ENCODE measurements at regions of chr16 and their contacts with region 1.

Region 1: DNA sequence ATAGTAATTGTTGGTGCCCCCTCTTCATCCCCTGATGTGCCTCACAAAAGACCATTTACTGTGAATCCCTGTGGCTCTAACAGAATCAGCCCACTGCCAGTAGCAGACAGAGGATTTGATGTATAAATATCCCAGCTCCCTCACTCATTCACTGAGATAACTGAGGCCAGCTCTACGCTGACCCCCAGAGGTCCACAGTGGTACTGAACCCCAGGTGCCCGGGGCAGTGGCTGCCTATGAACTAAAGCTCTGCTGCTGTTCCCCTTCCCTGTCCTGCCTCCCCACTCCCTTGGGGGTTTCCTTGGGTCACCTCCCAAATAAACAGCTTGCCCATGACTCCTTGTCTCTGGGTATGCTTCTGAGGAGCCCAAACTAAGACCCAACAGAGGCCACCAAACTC is 295.8 kb downstream of the FOXL1 start:
- DNase-seq: peak; percentile 60
- H3K4me3 ChIP-seq: no peak overlapping the region
- H3K27ac ChIP-seq: no peak overlapping the region
- H3K4me1 ChIP-seq: no peaks in the 10 kb centered on the region
- H3K27me3 ChIP-seq: no peaks in the 10 kb centered on the region
- CTCF ChIP-seq: peak; percentile 80 to 81
- POLR2A ChIP-seq: no peak

Region 2: GRCh38 chr16:86575754-86576557 is 298.2 kb before region 1 on chr16:
- CTCF ChIA-PET with region 1: interaction called, 39 read pairs
- POLR2A ChIA-PET with region 1: interaction called, 3 read pairs
- dilution Hi-C with region 1: no loop called
- intact Hi-C with region 1: loop called (anchors 1 kb)
- DNase-seq: peak; percentile 92
- H3K4me3 ChIP-seq: peak overlapping the region; percentile 33 to 67 (median 62)
- H3K27ac ChIP-seq: peak overlapping the region; percentile 82
- H3K4me1 ChIP-seq: peaks cover 56% of the 10 kb centered on the region
- H3K27me3 ChIP-seq: no peaks in the 10 kb centered on the region
- CTCF ChIP-seq: peak; percentile 73 to 74
- POLR2A ChIP-seq: peak; percentile 83

Region 3: DNA sequence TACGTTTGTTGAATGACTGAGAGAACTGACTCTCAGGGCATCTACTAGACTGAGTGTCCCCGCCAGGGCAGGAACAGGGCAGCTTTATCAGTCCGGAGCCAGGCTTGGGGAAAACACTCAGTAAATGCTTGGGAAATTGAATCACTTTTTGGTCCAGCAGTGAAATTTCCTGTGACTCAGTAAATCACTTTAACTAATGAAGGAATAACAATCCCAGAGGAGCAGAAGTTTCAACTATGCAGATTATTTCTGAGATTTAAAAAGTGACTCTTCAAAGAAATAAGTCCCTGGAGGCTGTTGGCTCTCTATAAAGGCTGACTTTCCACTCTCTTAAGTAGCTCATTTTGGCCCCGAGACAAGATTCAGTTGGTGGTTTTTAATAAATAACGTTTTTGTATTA is 194.0 kb before region 1 on chr16:
- CTCF ChIA-PET with region 1: interaction called, 13 read pairs
- POLR2A ChIA-PET with region 1: no interaction called
- dilution Hi-C with region 1: no loop called
- intact Hi-C with region 1: no loop called
- DNase-seq: peak; percentile 96
- H3K4me3 ChIP-seq: peak overlapping the region in 1 of 3 experiments; percentile 37
- H3K27ac ChIP-seq: peak overlapping the region; percentile 99
- H3K4me1 ChIP-seq: peaks cover 42% of the 10 kb centered on the region
- H3K27me3 ChIP-seq: no peaks in the 10 kb centered on the region
- CTCF ChIP-seq: no peak
- POLR2A ChIP-seq: peak; percentile 51

Region 4: GRCh38 chr16:86704516-86704915 is 169.6 kb before region 1 on chr16:
- CTCF ChIA-PET with region 1: no interaction called
- POLR2A ChIA-PET with region 1: no interaction called
- dilution Hi-C with region 1: no loop called
- intact Hi-C with region 1: no loop called
- DNase-seq: no peak
- H3K4me3 ChIP-seq: no peak overlapping the region
- H3K27ac ChIP-seq: no peak overlapping the region
- H3K4me1 ChIP-seq: no peaks in the 10 kb centered on the region
- H3K27me3 ChIP-seq: no peaks in the 10 kb centered on the region
- CTCF ChIP-seq: no peak
- POLR2A ChIP-seq: no peak

Region 5: DNA sequence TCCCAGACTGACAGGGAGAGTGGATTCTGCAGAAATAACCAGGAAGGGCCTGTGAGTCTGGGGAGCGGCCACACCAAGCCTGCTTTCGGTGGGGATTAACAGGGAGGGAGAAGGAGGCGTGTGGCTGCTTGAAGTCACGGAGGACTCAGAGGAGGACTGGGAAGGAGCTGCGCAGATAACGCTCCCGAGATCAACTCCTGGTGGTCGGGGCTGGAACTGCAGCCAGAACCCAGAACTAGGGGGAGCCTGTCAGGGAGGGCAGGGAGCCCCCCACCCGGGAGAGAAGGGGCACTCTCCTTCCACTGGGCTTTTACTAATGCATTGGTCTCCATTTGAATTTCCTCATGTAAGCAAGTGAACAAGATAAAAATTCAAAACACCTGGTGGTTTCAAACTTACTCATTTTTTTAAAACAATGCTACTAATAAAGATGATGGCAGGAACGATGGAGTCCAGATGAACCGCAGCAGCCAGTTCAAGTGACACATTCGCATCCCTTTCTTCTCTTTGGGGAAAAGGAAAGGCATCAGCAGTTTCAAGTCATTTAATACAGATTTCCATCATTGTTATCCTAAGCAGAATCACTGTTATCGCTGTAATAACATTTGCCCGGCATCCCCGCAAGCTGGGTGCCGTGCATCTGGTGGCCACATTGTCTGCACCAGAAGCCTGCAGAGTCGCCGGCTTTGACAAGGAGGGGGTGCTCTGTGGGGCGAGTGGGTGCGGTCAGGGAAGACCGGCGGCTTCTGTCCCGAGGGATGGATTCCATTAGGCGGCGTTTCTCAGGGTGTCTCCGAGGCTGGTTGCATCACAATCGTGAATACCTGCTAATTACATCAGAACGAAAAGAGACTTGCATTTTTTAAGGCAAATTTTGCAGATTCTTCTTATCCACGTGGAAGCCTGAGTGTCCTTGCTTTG is 112.8 kb before region 1 on chr16:
- CTCF ChIA-PET with region 1: interaction called, 31 read pairs
- POLR2A ChIA-PET with region 1: no interaction called
- dilution Hi-C with region 1: no loop called
- intact Hi-C with region 1: loop called (anchors 5 kb)
- DNase-seq: peak; percentile 72
- H3K4me3 ChIP-seq: no peak overlapping the region
- H3K27ac ChIP-seq: no peak overlapping the region
- H3K4me1 ChIP-seq: peaks cover 13% of the 10 kb centered on the region
- H3K27me3 ChIP-seq: peaks cover 0 to 8% of the 10 kb centered on the region in 2 experiments
- CTCF ChIP-seq: peak; percentile 91 to 96
- POLR2A ChIP-seq: no peak

Region 6: DNA sequence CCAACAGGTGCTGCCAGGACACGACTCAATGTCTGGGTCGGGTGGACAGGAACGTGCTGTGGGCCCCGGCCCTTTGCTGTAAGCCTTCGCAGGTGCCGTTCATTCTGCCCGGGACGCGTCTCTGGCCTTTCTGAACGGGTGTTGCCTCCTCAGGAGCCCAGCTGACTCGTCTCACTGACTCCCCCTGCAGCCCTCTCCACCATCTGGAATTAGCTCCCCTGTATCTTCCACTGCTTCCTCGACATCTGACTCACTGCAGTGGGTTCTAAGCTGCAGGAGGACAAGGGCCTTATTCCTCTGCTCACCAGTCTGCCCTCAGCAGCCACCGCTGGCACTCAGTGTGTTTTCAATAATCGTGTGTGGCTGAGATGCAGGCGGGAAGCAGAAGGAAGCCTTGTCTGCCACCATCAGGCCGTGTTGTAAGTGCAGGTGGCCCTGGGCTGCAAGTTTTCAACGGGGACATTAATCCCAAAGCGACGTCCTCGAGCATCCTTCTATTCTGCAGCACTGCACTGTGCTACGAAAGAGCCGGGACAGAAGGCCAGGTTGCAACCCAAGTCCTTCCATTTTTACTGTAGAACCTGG is 39.6 kb before region 1 on chr16:
- CTCF ChIA-PET with region 1: interaction called, 7 read pairs
- POLR2A ChIA-PET with region 1: no interaction called
- dilution Hi-C with region 1: no loop called
- intact Hi-C with region 1: loop called (anchors 5 kb)
- DNase-seq: peak; percentile 41
- H3K4me3 ChIP-seq: no peak overlapping the region
- H3K27ac ChIP-seq: no peak overlapping the region
- H3K4me1 ChIP-seq: peaks cover 7% of the 10 kb centered on the region
- H3K27me3 ChIP-seq: no peaks in the 10 kb centered on the region
- CTCF ChIP-seq: peak in 1 of 2 donors; percentile 29
- POLR2A ChIP-seq: no peak

Region 7: GRCh38 chr16:87017365-87018012 is 143.3 kb after region 1 on chr16:
- CTCF ChIA-PET with region 1: interaction called, 15 read pairs
- POLR2A ChIA-PET with region 1: no interaction called
- dilution Hi-C with region 1: no loop called
- intact Hi-C with region 1: loop called (anchors 1 kb)
- DNase-seq: peak; percentile 88
- H3K4me3 ChIP-seq: peak overlapping the region in 1 of 3 experiments; percentile 8
- H3K27ac ChIP-seq: peak overlapping the region; percentile 21
- H3K4me1 ChIP-seq: peaks cover 15% of the 10 kb centered on the region
- H3K27me3 ChIP-seq: no peaks in the 10 kb centered on the region
- CTCF ChIP-seq: peak; percentile 50 to 52
- POLR2A ChIP-seq: no peak

Measured in endothelial cell of umbilical vein (primary cell).